ENCODE measurements at regions of chr12 and their contacts with region 1.

Region 1: GRCh38 chr12:98227162-98227561 is 288.2 kb upstream of the TMPO start:
- DNase-seq: peak; percentile 21
- ATAC-seq: no peak
- H3K4me3 ChIP-seq: no peak overlapping the region
- H3K27ac ChIP-seq: no peak overlapping the region
- H3K4me1 ChIP-seq: no peaks in the 10 kb centered on the region
- H3K27me3 ChIP-seq: no peaks in the 10 kb centered on the region
- CTCF ChIP-seq: peak; percentile 50
- POLR2A ChIP-seq: no peak
- RAD21 ChIP-seq: peak; percentile 54

Region 2: GRCh38 chr12:98253207-98254037 is 26.3 kb after region 1 on chr12:
- CTCF ChIA-PET with region 1: no interaction called
- POLR2A ChIA-PET with region 1: no interaction called
- dilution Hi-C with region 1: no loop called
- in situ Hi-C with region 1: no loop called
- intact Hi-C with region 1: no loop called
- DNase-seq: no peak
- ATAC-seq: no peak
- H3K4me3 ChIP-seq: no peak overlapping the region
- H3K27ac ChIP-seq: no peak overlapping the region
- H3K4me1 ChIP-seq: no peaks in the 10 kb centered on the region
- H3K27me3 ChIP-seq: no peaks in the 10 kb centered on the region
- CTCF ChIP-seq: no peak
- POLR2A ChIP-seq: no peak
- RAD21 ChIP-seq: no peak

Region 3: DNA sequence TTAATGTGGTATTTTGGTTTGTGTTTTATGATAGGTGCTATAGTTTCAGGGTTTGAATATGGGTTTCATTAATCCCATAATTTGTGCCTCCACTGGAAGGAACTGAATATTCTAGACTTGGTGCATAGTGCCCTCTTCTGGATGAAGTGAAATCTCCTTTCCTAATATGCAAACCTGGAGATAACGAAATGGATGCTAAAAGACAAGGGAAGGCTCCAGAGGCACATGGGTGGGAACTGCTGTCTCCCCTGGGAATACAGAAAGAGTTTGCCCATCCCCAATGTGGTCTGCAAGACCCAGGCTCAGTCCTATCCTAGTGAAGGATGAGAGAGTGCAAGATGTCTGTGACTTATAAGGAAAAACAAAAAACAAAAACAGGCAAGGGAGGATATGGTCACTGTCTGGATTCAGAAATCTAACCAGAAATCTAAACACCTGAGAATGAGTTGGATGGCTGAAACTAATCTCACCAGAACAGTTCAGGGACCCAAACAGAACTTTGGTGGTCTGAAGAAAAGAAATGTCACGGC is 145.9 kb after region 1 on chr12:
- CTCF ChIA-PET with region 1: no interaction called
- POLR2A ChIA-PET with region 1: no interaction called
- dilution Hi-C with region 1: no loop called
- in situ Hi-C with region 1: no loop called
- intact Hi-C with region 1: loop called (anchors 5 kb)
- DNase-seq: peak; percentile 51
- ATAC-seq: peak; percentile 64; the same call in 1 of the 2 replicates
- H3K4me3 ChIP-seq: no peak overlapping the region
- H3K27ac ChIP-seq: no peak overlapping the region
- H3K4me1 ChIP-seq: no peaks in the 10 kb centered on the region
- H3K27me3 ChIP-seq: peaks cover 4% of the 10 kb centered on the region
- CTCF ChIP-seq: peak; percentile 75
- POLR2A ChIP-seq: no peak
- RAD21 ChIP-seq: peak; percentile 84

Measured in IMR-90 (cell line).